ENCODE measurements at regions of chr1 and their contacts with region 1.

Region 1: GRCh38 chr1:17502326-17502778 is 37.1 kb upstream of the ARHGEF10L start:
- DNase-seq: peak; percentile 4
- ATAC-seq: peak; percentile 100
- H3K4me3 ChIP-seq: no peak overlapping the region
- H3K27ac ChIP-seq: no peak overlapping the region
- H3K4me1 ChIP-seq: no peaks in the 10 kb centered on the region
- H3K27me3 ChIP-seq: no peaks in the 10 kb centered on the region
- CTCF ChIP-seq: peak; percentile 87 to 90 (median 89)
- EP300 ChIP-seq: no peak
- POLR2A ChIP-seq: no peak
- RAD21 ChIP-seq: peak; percentile 77

Region 2: DNA sequence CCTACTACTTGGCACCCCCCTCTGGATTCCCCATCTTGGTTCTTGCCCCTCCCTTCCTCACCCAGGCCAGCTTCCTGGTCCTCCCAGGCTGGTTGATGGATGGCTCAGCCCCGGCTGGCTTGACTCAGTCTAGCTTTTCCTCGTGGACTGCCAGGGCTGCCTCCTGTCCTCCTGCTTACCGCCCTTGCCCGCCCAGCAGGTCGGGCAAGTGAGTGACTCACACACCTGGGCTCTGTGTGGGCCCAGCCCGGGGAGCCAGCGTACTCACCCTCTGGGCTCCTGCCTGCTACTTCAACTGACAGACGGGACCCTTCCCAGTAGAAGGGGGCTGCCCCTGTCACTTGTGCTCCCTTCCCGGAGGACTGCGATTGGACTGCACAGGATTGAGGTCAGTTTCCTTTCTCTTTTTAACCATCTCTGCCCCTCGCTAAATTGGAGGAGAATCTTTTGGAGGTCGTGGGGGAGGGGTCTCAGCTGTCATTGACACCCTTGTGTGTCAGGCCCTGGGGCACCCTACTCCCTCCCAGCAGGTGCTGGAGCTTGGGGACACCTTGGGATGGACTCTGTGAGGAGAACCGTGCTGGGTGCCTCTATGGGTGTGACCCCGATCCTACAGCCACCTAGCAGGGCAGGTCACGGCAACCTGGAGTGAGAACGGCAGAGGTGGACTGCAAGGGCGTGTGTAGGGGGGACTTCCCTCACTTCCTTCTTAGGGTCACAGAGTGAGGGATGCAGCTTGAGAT is 17.9 kb after region 1 on chr1:
- CTCF ChIA-PET with region 1: interaction called, 4 read pairs
- POLR2A ChIA-PET with region 1: no interaction called
- RAD21 ChIA-PET with region 1: no interaction called
- SMC1A ChIA-PET with region 1: interaction called, 11 read pairs
- in situ Hi-C with region 1: no loop called
- intact Hi-C with region 1: no loop called
- DNase-seq: no peak
- ATAC-seq: no peak
- H3K4me3 ChIP-seq: no peak overlapping the region
- H3K27ac ChIP-seq: no peak overlapping the region
- H3K4me1 ChIP-seq: no peaks in the 10 kb centered on the region
- H3K27me3 ChIP-seq: peaks cover 0 to 3% of the 10 kb centered on the region in 2 experiments; a peak in 3 of 4 replicates
- CTCF ChIP-seq: no peak
- EP300 ChIP-seq: no peak
- POLR2A ChIP-seq: no peak
- RAD21 ChIP-seq: no peak

Region 3: DNA sequence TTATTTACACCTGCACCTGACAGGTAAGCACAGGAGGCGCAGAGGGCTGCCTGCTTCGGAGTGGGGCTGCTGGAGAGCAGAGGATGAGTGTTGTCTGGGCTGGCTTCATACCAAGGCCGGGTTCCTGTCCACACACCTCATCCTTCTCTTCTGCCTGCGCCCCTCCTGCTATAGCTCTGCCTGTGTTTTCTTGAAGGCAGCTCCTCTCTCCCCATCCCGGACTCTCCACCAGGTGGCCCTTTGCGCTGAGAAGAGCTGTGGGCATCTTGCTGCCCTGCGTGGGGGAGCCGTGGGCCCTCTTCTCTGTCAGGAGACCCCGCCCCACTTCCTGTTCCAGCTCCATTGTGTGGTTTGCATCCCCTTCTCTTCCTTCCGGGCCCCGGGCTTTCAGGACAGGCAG is 72.2 kb after region 1 on chr1:
- CTCF ChIA-PET with region 1: interaction called, 21 read pairs
- POLR2A ChIA-PET with region 1: no interaction called
- RAD21 ChIA-PET with region 1: interaction called, 6 read pairs
- SMC1A ChIA-PET with region 1: interaction called, 12 read pairs
- in situ Hi-C with region 1: no loop called
- intact Hi-C with region 1: no loop called
- DNase-seq: no peak
- ATAC-seq: peak; percentile 39
- H3K4me3 ChIP-seq: no peak overlapping the region
- H3K27ac ChIP-seq: no peak overlapping the region
- H3K4me1 ChIP-seq: no peaks in the 10 kb centered on the region
- H3K27me3 ChIP-seq: 0 out of 4 replicates have a peak, but pooled peaks cover 0 to 1% of the 10 kb centered on the region in 2 experiments
- CTCF ChIP-seq: no peak
- EP300 ChIP-seq: no peak
- POLR2A ChIP-seq: no peak
- RAD21 ChIP-seq: no peak

Region 4: GRCh38 chr1:17601643-17602382 is 99.5 kb after region 1 on chr1:
- CTCF ChIA-PET with region 1: interaction called, 255 read pairs
- POLR2A ChIA-PET with region 1: interaction called, 5 read pairs
- RAD21 ChIA-PET with region 1: interaction called, 118 read pairs
- SMC1A ChIA-PET with region 1: interaction called, 88 read pairs
- in situ Hi-C with region 1: loop called (anchors 10 kb)
- intact Hi-C with region 1: loop called (anchors 1 kb)
- DNase-seq: no peak
- ATAC-seq: peak; percentile 47; the same call in 2 of the 3 replicates
- H3K4me3 ChIP-seq: no peak overlapping the region
- H3K27ac ChIP-seq: no peak overlapping the region
- H3K4me1 ChIP-seq: no peaks in the 10 kb centered on the region
- H3K27me3 ChIP-seq: peaks cover 0 to 4% of the 10 kb centered on the region in 2 experiments; a peak in 3 of 4 replicates
- CTCF ChIP-seq: no peak; a peak in 1 of 6 replicates
- EP300 ChIP-seq: no peak
- POLR2A ChIP-seq: no peak
- RAD21 ChIP-seq: no peak

Region 5: DNA sequence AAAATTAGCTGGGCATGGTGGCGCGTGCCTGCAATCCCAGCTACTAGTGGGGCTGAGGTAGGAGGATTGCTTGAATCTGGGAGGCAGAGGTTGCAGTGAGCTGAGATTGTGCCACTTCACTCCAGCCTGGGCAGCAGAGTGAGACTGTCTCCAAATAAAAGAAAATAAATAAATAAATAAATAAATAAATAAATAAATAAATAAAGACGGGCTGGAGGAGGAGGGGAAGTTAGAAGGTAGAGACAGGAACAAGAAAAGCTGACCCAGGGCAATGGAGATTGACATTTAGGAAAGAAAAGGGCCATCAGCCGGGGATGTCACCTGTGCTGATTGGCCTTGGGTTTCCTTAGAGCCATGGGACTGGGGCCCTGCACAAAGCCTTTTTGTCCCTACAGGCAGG is 451.6 kb after region 1 on chr1:
- CTCF ChIA-PET with region 1: no interaction called
- POLR2A ChIA-PET with region 1: interaction called, 11 read pairs
- RAD21 ChIA-PET with region 1: no interaction called
- SMC1A ChIA-PET with region 1: no interaction called
- in situ Hi-C with region 1: no loop called
- intact Hi-C with region 1: no loop called
- DNase-seq: no peak
- ATAC-seq: no peak
- H3K4me3 ChIP-seq: no peak overlapping the region
- H3K27ac ChIP-seq: no peak overlapping the region
- H3K4me1 ChIP-seq: no peaks in the 10 kb centered on the region
- H3K27me3 ChIP-seq: peaks cover 2 to 4% of the 10 kb centered on the region in 2 experiments; a peak in 2 of 4 replicates
- CTCF ChIP-seq: no peak
- EP300 ChIP-seq: no peak
- POLR2A ChIP-seq: no peak
- RAD21 ChIP-seq: no peak

Measured in GM12878 (cell line).